ENCODE measurements at regions of chr2 and their contacts with region 1.

Region 1: GRCh38 chr2:67997528-67997900 is 65.3 kb downstream of the C1D start:
- DNase-seq: peak; percentile 87
- H3K4me3 ChIP-seq: peak overlapping the region in 1 of 3 experiments; percentile 19
- H3K27ac ChIP-seq: peak overlapping the region; percentile 93
- H3K4me1 ChIP-seq: peaks cover 17% of the 10 kb centered on the region
- H3K27me3 ChIP-seq: no peaks in the 10 kb centered on the region
- CTCF ChIP-seq: no peak
- POLR2A ChIP-seq: no peak

Region 2: DNA sequence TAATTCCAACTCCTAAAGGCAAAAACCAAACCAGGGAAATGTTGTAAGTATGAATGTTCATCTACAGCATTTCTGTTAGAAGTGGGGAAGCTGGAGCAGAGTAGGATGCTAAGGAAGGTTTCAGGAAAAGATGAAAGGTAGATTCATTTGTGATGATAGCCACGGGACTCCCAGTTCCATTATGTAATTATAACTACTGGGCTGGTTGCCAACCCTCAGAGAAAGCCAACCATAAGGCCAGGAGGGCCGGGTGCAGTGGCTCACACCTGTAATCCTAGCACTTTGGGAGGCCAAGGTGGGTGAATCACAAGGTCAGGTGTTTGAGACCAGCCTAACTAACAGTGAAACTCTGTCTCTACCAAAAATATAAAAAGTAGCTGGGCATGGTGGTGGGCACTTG is 889.3 kb before region 1 on chr2:
- CTCF ChIA-PET with region 1: no interaction called
- POLR2A ChIA-PET with region 1: no interaction called
- dilution Hi-C with region 1: no loop called
- intact Hi-C with region 1: loop called (anchors 5 kb)
- DNase-seq: no peak
- H3K4me3 ChIP-seq: no peak overlapping the region
- H3K27ac ChIP-seq: no peak overlapping the region
- H3K4me1 ChIP-seq: no peaks in the 10 kb centered on the region
- H3K27me3 ChIP-seq: no peaks in the 10 kb centered on the region
- CTCF ChIP-seq: no peak
- POLR2A ChIP-seq: no peak

Region 3: GRCh38 chr2:67311536-67311935 is 686.0 kb before region 1 on chr2:
- CTCF ChIA-PET with region 1: no interaction called
- POLR2A ChIA-PET with region 1: no interaction called
- dilution Hi-C with region 1: no loop called
- intact Hi-C with region 1: loop called (anchors 2 kb)
- DNase-seq: peak; percentile 56
- H3K4me3 ChIP-seq: no peak overlapping the region
- H3K27ac ChIP-seq: no peak overlapping the region
- H3K4me1 ChIP-seq: no peaks in the 10 kb centered on the region
- H3K27me3 ChIP-seq: no peaks in the 10 kb centered on the region
- CTCF ChIP-seq: no peak
- POLR2A ChIP-seq: no peak

Region 4: GRCh38 chr2:67846370-67847070 is 151.0 kb before region 1 on chr2:
- CTCF ChIA-PET with region 1: interaction called, 19 read pairs
- POLR2A ChIA-PET with region 1: no interaction called
- dilution Hi-C with region 1: no loop called
- intact Hi-C with region 1: loop called (anchors 1 kb)
- DNase-seq: peak; percentile 96
- H3K4me3 ChIP-seq: peak overlapping the region in 1 of 3 experiments; percentile 14
- H3K27ac ChIP-seq: peak overlapping the region; percentile 44
- H3K4me1 ChIP-seq: peaks cover 6% of the 10 kb centered on the region
- H3K27me3 ChIP-seq: no peaks in the 10 kb centered on the region
- CTCF ChIP-seq: peak; percentile 68 to 71
- POLR2A ChIP-seq: no peak

Region 5: GRCh38 chr2:67871686-67872412 is 125.7 kb before region 1 on chr2:
- CTCF ChIA-PET with region 1: interaction called, 4 read pairs
- POLR2A ChIA-PET with region 1: interaction called, 4 read pairs
- dilution Hi-C with region 1: no loop called
- intact Hi-C with region 1: loop called (anchors 10 kb)
- DNase-seq: peak; percentile 84
- H3K4me3 ChIP-seq: peak overlapping the region in 1 of 3 experiments; percentile 37
- H3K27ac ChIP-seq: peak overlapping the region; percentile 100
- H3K4me1 ChIP-seq: peaks cover 38% of the 10 kb centered on the region
- H3K27me3 ChIP-seq: no peaks in the 10 kb centered on the region
- CTCF ChIP-seq: no peak
- POLR2A ChIP-seq: no peak

Region 6: GRCh38 chr2:67917332-67918054 is 80.0 kb before region 1 on chr2:
- CTCF ChIA-PET with region 1: interaction called, 3 read pairs
- POLR2A ChIA-PET with region 1: no interaction called
- dilution Hi-C with region 1: no loop called
- intact Hi-C with region 1: loop called (anchors 1 kb)
- DNase-seq: peak; percentile 90
- H3K4me3 ChIP-seq: no peak overlapping the region
- H3K27ac ChIP-seq: peak overlapping the region; percentile 96
- H3K4me1 ChIP-seq: peaks cover 28% of the 10 kb centered on the region
- H3K27me3 ChIP-seq: no peaks in the 10 kb centered on the region
- CTCF ChIP-seq: no peak
- POLR2A ChIP-seq: no peak

Region 7: GRCh38 chr2:67984600-67984999 is 12.9 kb before region 1 on chr2:
- CTCF ChIA-PET with region 1: interaction called, 12 read pairs
- POLR2A ChIA-PET with region 1: no interaction called
- dilution Hi-C with region 1: no loop called
- intact Hi-C with region 1: no loop called
- DNase-seq: peak; percentile 37
- H3K4me3 ChIP-seq: no peak overlapping the region
- H3K27ac ChIP-seq: no peak overlapping the region
- H3K4me1 ChIP-seq: peaks cover 10% of the 10 kb centered on the region
- H3K27me3 ChIP-seq: no peaks in the 10 kb centered on the region
- CTCF ChIP-seq: no peak
- POLR2A ChIP-seq: no peak

Region 8: DNA sequence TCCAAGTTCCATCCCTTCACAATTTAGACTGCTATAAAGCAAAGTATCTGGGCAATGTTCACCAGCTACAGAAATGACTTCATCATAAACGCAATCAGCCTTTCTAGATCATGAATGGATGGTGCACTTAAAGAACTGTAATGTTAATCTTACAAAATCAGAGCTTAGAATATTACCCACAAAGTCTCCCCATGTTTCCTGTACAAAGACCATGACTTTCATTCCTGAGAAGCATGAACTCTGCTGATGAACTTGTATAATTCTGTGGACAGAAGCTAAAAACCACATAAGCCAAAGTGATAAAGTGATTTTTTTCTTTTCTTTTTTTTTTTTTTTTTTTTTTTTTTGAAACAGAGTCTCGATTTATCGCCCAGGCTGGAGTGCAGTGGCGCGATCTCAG is 12.0 kb after region 1 on chr2:
- CTCF ChIA-PET with region 1: no interaction called
- POLR2A ChIA-PET with region 1: no interaction called
- dilution Hi-C with region 1: no loop called
- intact Hi-C with region 1: no loop called
- DNase-seq: no peak
- H3K4me3 ChIP-seq: no peak overlapping the region
- H3K27ac ChIP-seq: no peak overlapping the region
- H3K4me1 ChIP-seq: no peaks in the 10 kb centered on the region
- H3K27me3 ChIP-seq: no peaks in the 10 kb centered on the region
- CTCF ChIP-seq: no peak
- POLR2A ChIP-seq: no peak

Measured in endothelial cell of umbilical vein (primary cell).